ENCODE measurements at regions of chr20 and their contacts with region 1.

Region 1: DNA sequence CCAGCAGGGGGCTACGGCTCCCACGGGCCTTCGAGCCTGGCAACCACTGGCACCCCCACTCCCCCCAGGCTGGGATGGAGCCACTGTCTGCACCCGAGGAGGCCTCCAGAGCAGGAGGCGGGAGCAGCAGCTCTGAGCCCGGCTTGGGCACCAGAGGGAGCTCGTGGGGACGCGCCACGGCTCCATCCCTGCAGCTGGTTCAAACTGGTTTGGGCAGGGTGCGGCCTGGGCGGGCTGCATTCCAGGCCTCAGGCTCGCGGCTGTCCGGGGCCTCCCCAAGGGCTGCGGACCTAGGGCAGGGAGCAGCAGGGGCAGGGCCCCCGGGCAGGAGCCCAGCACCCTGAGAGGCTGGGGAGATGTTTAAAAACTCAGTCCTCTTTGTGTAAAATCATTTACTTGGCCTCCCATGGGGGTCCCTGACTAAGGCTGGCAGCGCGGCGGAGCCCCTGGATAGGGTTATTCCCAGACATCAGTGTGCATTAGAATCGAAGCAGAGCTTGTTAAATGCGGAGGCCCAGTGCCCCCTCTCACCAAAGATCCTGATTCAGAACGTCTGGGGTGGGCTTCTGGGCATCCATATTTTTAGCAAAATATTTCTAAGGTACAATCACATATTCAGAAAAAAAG is 4.1 kb upstream of the BCAS4 start:
- DNase-seq: peak; percentile 88 to 92 (median 91)
- ATAC-seq: peak; percentile 91 to 96 (median 92)
- H3K4me3 ChIP-seq: peak overlapping the region in 9 of 12 donors; percentile 3 to 44 (median 29)
- H3K27ac ChIP-seq: peak overlapping the region; percentile 53 to 89 (median 70)
- H3K4me1 ChIP-seq: peaks cover 0 to 41% (median 20%) of the 10 kb centered on the region in 12 donors
- H3K27me3 ChIP-seq: peaks cover 0 to 6% (median 0%) of the 10 kb centered on the region in 9 donors
- CTCF ChIP-seq: peak; percentile 54 to 91 (median 75)
- POLR2A ChIP-seq: no peak

Region 2: GRCh38 chr20:50929299-50930138 is 138.8 kb after region 1 on chr20:
- intact Hi-C with region 1: loop called (anchors 1 to 10 kb)
- DNase-seq: peak; percentile 86 to 92 (median 89)
- ATAC-seq: peak; percentile 71 to 79 (median 74)
- H3K4me3 ChIP-seq: peak overlapping the region; percentile 71 to 92 (median 78)
- H3K27ac ChIP-seq: peak overlapping the region in 11 of 12 donors; percentile 63 to 99 (median 79)
- H3K4me1 ChIP-seq: peaks cover 0 to 62% (median 37%) of the 10 kb centered on the region in 12 donors
- H3K27me3 ChIP-seq: no peaks in the 10 kb centered on the region
- CTCF ChIP-seq: peak; percentile 69 to 92 (median 80)
- POLR2A ChIP-seq: no peak

Region 3: DNA sequence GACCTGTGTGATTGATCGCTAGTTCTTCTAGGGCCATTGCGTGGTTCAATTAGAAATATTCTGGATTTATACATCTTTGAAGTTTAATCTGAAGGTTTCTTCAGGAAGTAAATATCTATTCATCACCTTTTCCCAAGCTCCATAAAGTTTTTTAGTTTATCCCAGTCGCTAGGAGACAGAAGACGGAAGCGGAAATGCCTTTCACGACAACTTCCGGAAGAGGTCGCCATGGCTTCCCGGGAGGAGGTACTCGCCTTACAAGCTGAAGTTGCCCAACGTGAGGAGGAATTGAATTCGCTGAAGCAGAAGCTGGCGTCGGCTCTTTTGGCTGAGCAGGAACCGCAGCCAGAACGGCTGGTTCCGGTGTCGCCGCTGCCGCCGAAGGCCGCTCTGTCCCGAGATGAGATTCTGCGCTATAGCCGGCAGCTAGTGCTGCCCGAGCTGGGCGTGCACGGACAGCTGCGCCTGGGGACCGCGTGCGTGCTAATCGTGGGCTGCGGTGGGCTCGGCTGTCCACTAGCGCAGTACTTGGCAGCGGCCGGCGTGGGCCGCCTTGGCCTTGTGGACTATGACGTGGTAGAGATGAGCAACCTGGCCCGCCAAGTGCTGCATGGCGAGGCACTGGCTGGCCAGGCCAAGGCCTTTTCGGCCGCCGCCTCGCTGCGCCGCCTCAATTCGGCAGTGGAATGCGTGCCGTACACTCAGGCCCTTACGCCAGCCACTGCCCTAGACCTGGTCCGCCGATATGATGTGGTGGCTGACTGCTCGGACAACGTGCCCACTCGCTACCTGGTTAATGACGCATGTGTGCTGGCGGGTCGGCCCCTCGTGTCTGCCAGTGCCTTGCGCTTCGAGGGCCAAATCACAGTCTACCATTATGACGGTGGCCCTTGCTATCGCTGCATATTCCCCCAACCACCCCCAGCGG is 168.1 kb after region 1 on chr20 and contains the start of gene MOCS3:
- intact Hi-C with region 1: loop called in 1 of 10 experiments (anchors 5 kb)
- DNase-seq: peak; percentile 83 to 87 (median 86)
- ATAC-seq: peak; percentile 68 to 88 (median 84)
- H3K4me3 ChIP-seq: peak within 1 kb of the TSS; percentile 70 to 97 (median 92)
- H3K27ac ChIP-seq: peak within 1 kb of the TSS; percentile 86 to 98 (median 92)
- H3K4me1 ChIP-seq: peaks cover 5 to 58% (median 45%) of the 10 kb centered on the region in 12 donors
- H3K27me3 ChIP-seq: no peaks in the 10 kb centered on the region
- CTCF ChIP-seq: peak in 2 of 12 donors; percentile 20 to 24
- POLR2A ChIP-seq: peak in 1 of 2 donors; percentile 1
- total RNA-seq, gene MOCS3: 2.6 to 3.9 (median 2.8) TPM

Region 4: GRCh38 chr20:51306503-51307358 is 516.0 kb after region 1 on chr20:
- intact Hi-C with region 1: loop called in 4 of 10 experiments (anchors 5 to 10 kb)
- DNase-seq: peak; percentile 61 to 85 (median 68)
- ATAC-seq: peak; percentile 90 to 97 (median 92)
- H3K4me3 ChIP-seq: no peak overlapping the region
- H3K27ac ChIP-seq: no peak overlapping the region
- H3K4me1 ChIP-seq: peaks cover 0 to 7% (median 0%) of the 10 kb centered on the region in 12 donors
- H3K27me3 ChIP-seq: peaks cover 0 to 15% (median 0%) of the 10 kb centered on the region in 9 donors
- CTCF ChIP-seq: peak; percentile 86 to 96 (median 90)
- POLR2A ChIP-seq: no peak

Region 5: GRCh38 chr20:51318058-51318895 is 527.5 kb after region 1 on chr20:
- intact Hi-C with region 1: loop called in 2 of 10 experiments (anchors 10 kb)
- DNase-seq: peak in 1 of 5 donors; percentile 12
- ATAC-seq: peak in 1 of 4 donors; percentile 29
- H3K4me3 ChIP-seq: no peak overlapping the region
- H3K27ac ChIP-seq: no peak overlapping the region
- H3K4me1 ChIP-seq: no peaks in the 10 kb centered on the region
- H3K27me3 ChIP-seq: peaks cover 0 to 3% (median 0%) of the 10 kb centered on the region in 9 donors
- CTCF ChIP-seq: peak in 11 of 12 donors; percentile 15 to 49 (median 33)
- POLR2A ChIP-seq: no peak

Region 6: GRCh38 chr20:51326201-51326819 is 535.5 kb after region 1 on chr20:
- intact Hi-C with region 1: loop called in 1 of 10 experiments (anchors 10 kb)
- DNase-seq: peak in 1 of 5 donors; percentile 36
- ATAC-seq: no peak
- H3K4me3 ChIP-seq: no peak overlapping the region
- H3K27ac ChIP-seq: no peak overlapping the region
- H3K4me1 ChIP-seq: no peaks in the 10 kb centered on the region
- H3K27me3 ChIP-seq: peaks cover 0 to 16% (median 0%) of the 10 kb centered on the region in 9 donors
- CTCF ChIP-seq: peak in 11 of 12 donors; percentile 14 to 75 (median 38)
- POLR2A ChIP-seq: no peak

Measured in heart left ventricle (tissue), 16 donors.